Uterus (tissue), 4 donors: ENCODE measurements at regions of chr5 and their contacts with region 1.

Region 1: GRCh38 chr5:67161002-67161401 is 35.6 kb downstream of the CD180 start:
- DNase-seq: no peak
- H3K4me3 ChIP-seq: no peak overlapping the region
- H3K27ac ChIP-seq: peak overlapping the region; percentile 66 to 68
- H3K4me1 ChIP-seq: no peaks in the 10 kb centered on the region
- H3K27me3 ChIP-seq: no peaks in the 10 kb centered on the region
- CTCF ChIP-seq: no peak
- POLR2A ChIP-seq: no peak

Region 2: DNA sequence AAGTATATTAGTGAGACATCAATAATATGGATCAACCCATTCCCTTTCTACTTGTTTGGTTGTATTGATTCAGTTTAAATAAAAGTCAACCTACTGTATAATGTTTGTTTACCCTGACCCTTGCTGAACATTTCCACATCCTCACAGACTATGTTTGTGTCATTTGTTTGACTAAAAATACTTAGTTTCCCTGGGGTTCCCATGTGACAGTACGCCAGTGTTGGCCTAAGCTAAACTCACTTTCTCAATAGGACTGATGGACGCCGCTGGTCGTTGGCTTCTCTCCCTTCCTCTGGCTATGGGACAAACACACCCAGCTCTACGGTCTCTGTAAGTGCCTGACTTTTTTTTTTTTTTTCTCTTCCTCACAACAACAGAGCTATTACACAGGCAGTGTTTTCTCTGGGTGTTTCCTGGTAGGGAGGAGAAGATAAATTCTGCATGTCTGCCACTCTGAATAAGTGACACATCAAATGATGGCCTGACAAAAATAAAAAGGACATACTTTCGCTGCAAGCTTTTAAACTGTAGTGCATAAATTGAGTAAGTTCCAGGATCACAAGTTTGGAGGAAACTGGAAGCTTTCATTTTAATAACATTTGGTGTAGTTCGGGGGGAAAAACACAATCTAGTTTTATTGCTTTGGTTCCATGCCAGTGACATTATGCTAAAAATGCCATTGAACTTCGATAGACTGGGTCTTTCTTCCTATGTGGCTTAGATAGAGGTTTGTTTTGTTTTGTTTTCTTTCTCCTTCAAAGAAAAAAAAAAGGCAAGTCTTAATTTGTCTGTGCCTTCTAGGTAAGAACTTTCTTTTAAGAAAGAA is 65.4 kb before region 1 on chr5:
- intact Hi-C with region 1: no loop called
- DNase-seq: peak; percentile 75 to 81
- H3K4me3 ChIP-seq: peak overlapping the region; percentile 12
- H3K27ac ChIP-seq: peak overlapping the region; percentile 74 to 90
- H3K4me1 ChIP-seq: peaks cover 7 to 18% of the 10 kb centered on the region in 2 donors
- H3K27me3 ChIP-seq: no peaks in the 10 kb centered on the region
- CTCF ChIP-seq: no peak
- POLR2A ChIP-seq: no peak

Region 3: GRCh38 chr5:67209142-67209771 is 48.3 kb after region 1 on chr5:
- intact Hi-C with region 1: loop called (anchors 5 kb)
- DNase-seq: peak; percentile 53 to 82
- H3K4me3 ChIP-seq: no peak overlapping the region
- H3K27ac ChIP-seq: peak overlapping the region; percentile 56 to 59
- H3K4me1 ChIP-seq: peaks cover 0 to 5% of the 10 kb centered on the region in 2 donors
- H3K27me3 ChIP-seq: no peaks in the 10 kb centered on the region
- CTCF ChIP-seq: peak; percentile 77 to 91 (median 85)
- POLR2A ChIP-seq: no peak

Region 4: GRCh38 chr5:67234671-67235176 is 73.7 kb after region 1 on chr5:
- intact Hi-C with region 1: no loop called
- DNase-seq: peak in 1 of 2 donors; percentile 63
- H3K4me3 ChIP-seq: peak overlapping the region in 1 of 2 donors; percentile 19
- H3K27ac ChIP-seq: peak overlapping the region; percentile 61 to 71
- H3K4me1 ChIP-seq: no peaks in the 10 kb centered on the region
- H3K27me3 ChIP-seq: no peaks in the 10 kb centered on the region
- CTCF ChIP-seq: no peak
- POLR2A ChIP-seq: no peak